K562 (cell line): ENCODE measurements at regions of chr14 and their contacts with region 1.

Region 1: GRCh38 chr14:65042731-65043372 is 56.2 kb downstream of the FNTB start:
- DNase-seq: peak; percentile 55 to 91 (median 65)
- ATAC-seq: peak; percentile 81
- H3K4me3 ChIP-seq: no peak overlapping the region
- H3K27ac ChIP-seq: peak overlapping the region; percentile 96
- H3K4me1 ChIP-seq: peaks cover 19 to 44% of the 10 kb centered on the region in 2 experiments
- H3K27me3 ChIP-seq: no peaks in the 10 kb centered on the region
- CTCF ChIP-seq: no peak
- EP300 ChIP-seq: peak; percentile 97
- POLR2A ChIP-seq: no peak
- RAD21 ChIP-seq: no peak

Region 2: DNA sequence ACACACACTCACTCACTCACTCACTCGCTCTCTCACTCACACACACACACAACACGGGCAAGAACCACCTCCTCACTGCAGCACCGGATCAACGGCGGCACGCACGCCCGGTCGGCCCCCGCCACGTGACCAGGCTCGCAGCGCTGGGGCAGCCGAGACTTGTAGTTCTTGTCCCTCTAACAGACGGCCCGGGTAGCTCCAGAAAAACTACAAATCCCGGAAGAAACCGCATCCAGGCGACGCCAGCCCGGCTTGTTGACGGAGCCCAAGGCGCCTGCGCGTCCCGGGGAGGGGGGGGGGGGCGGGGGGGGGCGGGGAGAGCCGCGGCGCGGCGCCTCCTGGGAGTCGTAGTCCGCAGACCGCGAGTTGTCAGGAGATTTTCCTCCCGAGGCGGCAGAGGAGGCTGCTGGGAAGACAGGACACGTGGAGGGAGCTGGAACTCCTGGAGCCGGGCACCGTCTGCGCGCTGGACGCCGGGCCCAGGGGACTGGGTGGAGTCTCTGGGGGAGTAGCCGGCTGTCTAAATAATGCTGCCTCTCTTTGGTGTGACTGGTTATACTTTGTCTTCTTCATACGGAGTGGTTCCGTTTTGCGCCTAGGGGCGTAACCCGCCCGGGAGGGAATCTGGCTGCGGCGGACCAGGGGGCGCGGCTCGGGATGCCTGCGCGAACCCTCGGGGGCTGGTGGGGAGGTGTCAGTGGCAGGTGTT is 59.7 kb after region 1 on chr14 and contains the start of gene MAX:
- CTCF ChIA-PET with region 1: no interaction called
- POLR2A ChIA-PET with region 1: interaction called, 3 read pairs
- in situ Hi-C with region 1: no loop called
- intact Hi-C with region 1: loop called (anchors 5 kb)
- DNase-seq: peak; percentile 88 to 95 (median 91)
- ATAC-seq: peak; percentile 93
- H3K4me3 ChIP-seq: peak within 1 kb of the TSS; percentile 94
- H3K27ac ChIP-seq: peak within 1 kb of the TSS; percentile 81
- H3K4me1 ChIP-seq: peaks cover 17 to 25% of the 10 kb centered on the region in 2 experiments
- H3K27me3 ChIP-seq: no peaks in the 10 kb centered on the region
- CTCF ChIP-seq: no peak
- EP300 ChIP-seq: no peak
- POLR2A ChIP-seq: peak; percentile 63; the same call in 1 of the 2 replicates
- RAD21 ChIP-seq: no peak
- polyA plus RNA-seq, gene MAX: 15.4 to 32.7 TPM

Region 3: GRCh38 chr14:65142429-65142828 is 99.6 kb after region 1 on chr14:
- CTCF ChIA-PET with region 1: no interaction called
- POLR2A ChIA-PET with region 1: no interaction called
- in situ Hi-C with region 1: no loop called
- intact Hi-C with region 1: no loop called
- DNase-seq: no peak
- ATAC-seq: no peak
- H3K4me3 ChIP-seq: no peak overlapping the region
- H3K27ac ChIP-seq: no peak overlapping the region
- H3K4me1 ChIP-seq: peaks cover 4 to 5% of the 10 kb centered on the region in 2 experiments; a peak in 2 of 5 replicates
- H3K27me3 ChIP-seq: no peaks in the 10 kb centered on the region
- CTCF ChIP-seq: no peak
- EP300 ChIP-seq: no peak
- POLR2A ChIP-seq: no peak
- RAD21 ChIP-seq: no peak

Region 4: GRCh38 chr14:65336191-65336591 is 293.3 kb after region 1 on chr14:
- CTCF ChIA-PET with region 1: no interaction called
- POLR2A ChIA-PET with region 1: no interaction called
- in situ Hi-C with region 1: no loop called
- intact Hi-C with region 1: no loop called
- DNase-seq: no peak
- ATAC-seq: no peak
- H3K4me3 ChIP-seq: no peak overlapping the region
- H3K27ac ChIP-seq: no peak overlapping the region
- H3K4me1 ChIP-seq: no peaks in the 10 kb centered on the region
- H3K27me3 ChIP-seq: no peaks in the 10 kb centered on the region
- CTCF ChIP-seq: no peak
- EP300 ChIP-seq: no peak
- POLR2A ChIP-seq: no peak
- RAD21 ChIP-seq: no peak